PC-3 (cell line): ENCODE measurements at regions of chr6 and their contacts with region 1.

Region 1: DNA sequence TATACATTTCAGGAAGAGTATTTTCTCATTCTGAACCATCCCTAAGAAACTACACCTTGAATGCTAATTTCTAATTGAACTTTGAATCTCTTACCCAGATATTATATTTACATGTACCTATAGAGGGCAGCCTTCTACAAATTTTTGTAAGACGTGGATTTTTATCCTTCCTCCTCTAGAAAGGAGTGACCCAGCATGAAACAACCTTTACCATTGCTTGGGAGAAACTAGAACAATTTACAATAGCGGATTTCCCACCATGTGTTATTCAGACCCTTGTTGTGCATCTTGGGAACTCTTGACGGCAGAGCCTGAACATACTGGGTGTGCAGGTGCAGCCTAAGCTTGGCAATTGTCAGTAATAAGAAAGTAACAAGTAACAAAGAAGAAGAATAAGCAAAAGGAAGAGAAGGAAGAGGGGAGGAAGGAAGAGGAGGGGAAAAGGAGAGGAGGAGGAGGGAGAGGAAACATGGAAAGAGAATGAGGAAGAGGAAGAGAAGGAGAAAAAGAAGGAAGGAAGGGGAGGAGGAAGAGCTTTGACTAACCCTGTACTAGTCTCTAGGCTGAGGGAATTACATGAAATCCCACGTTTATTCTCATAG is 10.8 kb upstream of the TAAR1 start:
- DNase-seq: peak; percentile 64
- ATAC-seq: peak; percentile 64
- H3K4me3 ChIP-seq: peak overlapping the region; percentile 44; the same call in 1 of the 2 replicates
- H3K27ac ChIP-seq: no peak overlapping the region
- H3K4me1 ChIP-seq: peaks cover 4% of the 10 kb centered on the region; the same call in 1 of the 2 replicates
- H3K27me3 ChIP-seq: no peaks in the 10 kb centered on the region
- CTCF ChIP-seq: peak; percentile 72

Region 2: GRCh38 chr6:132530293-132530974 is 139.4 kb before region 1 on chr6:
- CTCF ChIA-PET with region 1: no interaction called
- POLR2A ChIA-PET with region 1: no interaction called
- intact Hi-C with region 1: loop called (anchors 1 kb)
- DNase-seq: peak; percentile 70
- ATAC-seq: peak; percentile 75
- H3K4me3 ChIP-seq: peak overlapping the region; percentile 66
- H3K27ac ChIP-seq: no peak overlapping the region
- H3K4me1 ChIP-seq: peaks cover 26% of the 10 kb centered on the region
- H3K27me3 ChIP-seq: no peaks in the 10 kb centered on the region
- CTCF ChIP-seq: peak; percentile 69

Region 3: DNA sequence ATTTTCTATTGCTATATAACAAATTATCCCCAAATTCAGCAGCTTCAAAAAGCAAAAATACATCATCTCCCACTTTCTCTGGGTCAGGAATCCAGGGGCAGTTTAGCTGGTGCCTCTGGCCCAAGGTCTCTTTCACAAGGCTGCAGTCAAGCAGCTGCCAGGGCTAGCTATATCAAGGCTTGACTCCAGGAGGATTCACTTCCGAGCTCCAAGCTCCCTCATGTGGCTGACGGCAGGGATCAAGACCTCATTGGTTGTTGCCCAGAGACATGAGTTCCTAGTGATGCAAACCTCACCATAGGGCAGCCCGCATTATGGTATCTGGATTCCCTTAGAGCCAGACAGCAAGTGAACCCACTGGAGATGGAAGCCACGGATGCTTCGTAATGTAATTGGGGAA is 45.4 kb after region 1 on chr6:
- CTCF ChIA-PET with region 1: interaction called, 5 read pairs
- POLR2A ChIA-PET with region 1: no interaction called
- intact Hi-C with region 1: loop called (anchors 1 kb)
- DNase-seq: peak; percentile 72
- ATAC-seq: peak; percentile 84
- H3K4me3 ChIP-seq: no peak overlapping the region
- H3K27ac ChIP-seq: no peak overlapping the region
- H3K4me1 ChIP-seq: 0 out of 2 replicates have a peak, but pooled peaks cover 8% of the 10 kb centered on the region
- H3K27me3 ChIP-seq: no peaks in the 10 kb centered on the region
- CTCF ChIP-seq: peak; percentile 66

Region 4: GRCh38 chr6:132730560-132730959 is 60.8 kb after region 1 on chr6:
- CTCF ChIA-PET with region 1: interaction called, 15 read pairs
- POLR2A ChIA-PET with region 1: interaction called, 4 read pairs
- intact Hi-C with region 1: no loop called
- DNase-seq: peak; percentile 86
- ATAC-seq: peak; percentile 95
- H3K4me3 ChIP-seq: no peak overlapping the region
- H3K27ac ChIP-seq: peak overlapping the region; percentile 80
- H3K4me1 ChIP-seq: peaks cover 20% of the 10 kb centered on the region
- H3K27me3 ChIP-seq: no peaks in the 10 kb centered on the region
- CTCF ChIP-seq: no peak

Region 5: DNA sequence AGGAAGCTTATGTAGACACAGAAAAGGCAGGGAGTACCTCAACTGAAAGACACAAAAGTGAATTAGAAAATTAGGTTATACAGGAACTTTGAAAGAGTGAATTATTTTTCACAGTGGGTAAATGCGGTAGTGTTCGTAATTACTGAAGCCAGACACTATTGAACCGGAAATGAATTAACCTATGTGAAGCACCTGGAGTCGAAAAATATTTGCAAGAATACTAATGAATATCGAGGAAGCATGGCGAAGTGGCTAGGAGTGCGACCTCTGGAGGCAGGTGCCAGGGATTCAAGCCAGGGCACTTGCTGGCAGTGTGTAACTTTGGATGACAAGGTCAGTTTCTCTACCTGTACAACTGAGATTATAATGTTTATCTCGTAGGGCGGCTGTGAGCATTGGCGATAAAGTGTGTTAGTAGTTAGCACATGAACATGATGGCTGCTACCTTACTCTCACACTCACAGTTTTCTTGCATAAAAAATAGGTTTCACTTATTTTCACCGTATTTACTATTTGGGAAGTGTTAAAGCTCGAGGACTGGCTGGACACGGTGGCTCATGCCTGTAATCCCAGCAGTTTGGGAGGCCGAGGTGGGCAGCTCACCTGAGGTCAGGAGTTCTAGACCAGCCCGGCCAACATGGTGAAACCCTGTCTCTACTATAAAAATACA is 129.2 kb after region 1 on chr6:
- CTCF ChIA-PET with region 1: no interaction called
- POLR2A ChIA-PET with region 1: no interaction called
- intact Hi-C with region 1: loop called (anchors 1 kb)
- DNase-seq: peak; percentile 77
- ATAC-seq: peak; percentile 89
- H3K4me3 ChIP-seq: no peak overlapping the region; the same call in 1 of the 2 replicates
- H3K27ac ChIP-seq: 0 out of 2 replicates have a peak overlapping the region, but pooled peaks have one; percentile 14
- H3K4me1 ChIP-seq: no peaks in the 10 kb centered on the region
- H3K27me3 ChIP-seq: no peaks in the 10 kb centered on the region
- CTCF ChIP-seq: peak; percentile 78